Prostate gland (tissue), 2 donors: ENCODE measurements at regions of chr13 and their contacts with region 1.

Region 1: GRCh38 chr13:41244556-41244955 is 18.8 kb downstream of the MTRF1 start:
- DNase-seq: no peak
- H3K4me3 ChIP-seq: no peak overlapping the region
- H3K27ac ChIP-seq: peak overlapping the region; percentile 7 to 40
- H3K4me1 ChIP-seq: no peaks in the 10 kb centered on the region
- H3K27me3 ChIP-seq: no peaks in the 10 kb centered on the region
- CTCF ChIP-seq: no peak
- POLR2A ChIP-seq: no peak

Region 2: DNA sequence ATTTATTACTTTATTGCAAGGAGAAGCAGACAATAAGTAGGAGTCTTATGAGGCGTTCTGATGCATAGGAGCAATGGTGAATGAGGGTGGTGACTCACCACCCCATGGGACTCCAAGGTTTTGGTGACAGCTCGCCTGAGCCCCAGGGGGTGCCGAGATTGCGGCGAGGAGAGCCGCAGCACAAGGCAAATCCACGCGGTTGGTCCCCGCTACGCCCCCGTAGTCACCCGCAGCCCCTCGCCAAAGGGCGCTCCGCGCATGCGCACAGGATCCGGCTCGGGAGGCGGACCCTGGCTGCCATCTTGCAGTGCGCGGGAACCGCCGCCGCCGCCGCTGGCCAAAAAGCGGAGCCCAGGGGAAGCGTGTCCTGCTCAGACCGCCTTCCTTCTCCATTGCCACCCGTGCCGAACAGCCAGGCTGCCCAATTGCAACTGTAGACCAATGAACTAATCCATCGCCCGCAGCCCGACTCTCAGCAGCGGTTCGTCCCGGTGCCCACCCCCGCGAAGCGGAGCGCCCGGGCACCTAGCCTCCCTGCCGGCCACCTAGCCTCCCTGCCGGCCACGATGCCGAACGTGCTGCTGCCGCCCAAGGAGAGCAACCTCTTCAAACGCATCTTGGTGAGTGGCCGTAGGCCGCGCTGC is 66.5 kb after region 1 on chr13 and contains the start of gene NAA16:
- intact Hi-C with region 1: loop called (anchors 5 kb)
- DNase-seq: peak; percentile 73
- H3K4me3 ChIP-seq: peak within 1 kb of the TSS; percentile 70 to 76
- H3K27ac ChIP-seq: peak within 1 kb of the TSS; percentile 93 to 97
- H3K4me1 ChIP-seq: no peaks in the 10 kb centered on the region
- H3K27me3 ChIP-seq: no peaks in the 10 kb centered on the region
- CTCF ChIP-seq: peak in 2 of 4 experiments; percentile 25 to 38
- POLR2A ChIP-seq: peak; percentile 75
- total RNA-seq, gene NAA16: 17.6 to 19.9 TPM